AG04449 (cell line): ENCODE measurements at regions of chr9 and their contacts with region 1.

Region 1: DNA sequence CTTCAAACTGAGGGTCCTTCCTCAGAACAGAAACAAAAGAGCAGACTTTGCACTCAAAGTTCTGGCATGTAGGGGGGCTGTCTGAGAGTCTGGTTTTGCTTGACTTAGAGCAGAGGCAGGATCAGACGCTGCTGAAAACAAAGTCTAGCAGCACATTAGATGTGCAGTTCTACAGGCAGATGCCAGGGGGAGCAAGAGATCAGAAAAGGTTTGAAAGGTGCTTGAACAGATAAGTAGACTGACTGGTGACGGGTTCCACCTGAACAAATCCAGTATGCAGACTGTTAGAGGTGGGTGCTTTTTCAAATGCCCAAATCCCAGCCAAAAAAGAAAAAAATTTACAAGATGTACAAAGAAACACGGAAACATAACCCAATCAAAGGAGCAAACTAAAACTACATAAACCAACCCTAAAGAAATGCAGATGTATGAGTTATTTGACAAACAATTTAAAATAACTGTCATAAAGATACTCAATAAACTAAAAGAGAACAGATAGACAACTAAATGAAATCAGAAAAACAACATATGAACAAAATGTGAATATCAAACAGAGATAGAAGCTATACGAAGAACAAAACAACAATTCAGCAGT is 194.7 kb upstream of the FREM1 start:
- DNase-seq: no peak
- H3K4me3 ChIP-seq: no peak overlapping the region
- CTCF ChIP-seq: peak; percentile 71

Region 2: DNA sequence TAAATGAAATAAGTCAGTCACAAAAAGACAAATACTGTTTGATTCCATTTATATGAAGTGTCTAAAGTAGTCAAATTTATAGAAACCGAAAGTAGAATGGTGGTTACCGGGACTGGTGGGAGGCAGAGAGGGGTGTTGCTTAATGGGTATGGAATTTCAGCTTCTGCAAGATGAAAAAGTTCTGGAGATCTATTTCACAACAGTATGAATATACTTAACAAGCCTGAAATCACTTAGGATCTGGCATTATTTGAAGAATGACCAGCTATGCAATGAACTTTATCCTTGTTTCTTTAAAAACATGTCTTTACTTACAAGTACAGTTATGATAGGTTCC is 180.1 kb before region 1 on chr9:
- CTCF ChIA-PET with region 1: no interaction called
- POLR2A ChIA-PET with region 1: no interaction called
- DNase-seq: peak; percentile 50
- H3K4me3 ChIP-seq: peak overlapping the region; percentile 1; the same call in 1 of the 2 replicates
- CTCF ChIP-seq: no peak

Region 3: DNA sequence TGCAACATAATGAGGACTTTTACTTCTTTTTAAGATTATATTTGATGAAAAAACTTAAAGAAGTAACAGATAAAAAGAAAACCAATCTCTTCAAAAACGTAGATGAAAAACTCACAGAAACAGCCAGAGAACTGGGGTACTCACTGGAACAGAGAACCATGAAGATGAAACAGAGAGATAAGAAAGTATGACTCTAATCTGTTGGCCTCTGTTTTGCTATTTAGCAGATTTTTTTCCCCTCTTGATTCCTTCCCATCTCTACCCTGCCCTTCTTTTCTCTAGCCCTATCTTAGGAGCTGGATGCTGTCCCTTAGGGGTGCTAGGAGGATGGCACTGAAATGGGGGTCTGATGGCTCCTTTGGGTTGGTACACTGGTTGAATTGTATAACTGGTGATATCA is 97.2 kb before region 1 on chr9:
- CTCF ChIA-PET with region 1: no interaction called
- POLR2A ChIA-PET with region 1: no interaction called
- DNase-seq: no peak
- H3K4me3 ChIP-seq: no peak overlapping the region
- CTCF ChIP-seq: no peak

Region 4: DNA sequence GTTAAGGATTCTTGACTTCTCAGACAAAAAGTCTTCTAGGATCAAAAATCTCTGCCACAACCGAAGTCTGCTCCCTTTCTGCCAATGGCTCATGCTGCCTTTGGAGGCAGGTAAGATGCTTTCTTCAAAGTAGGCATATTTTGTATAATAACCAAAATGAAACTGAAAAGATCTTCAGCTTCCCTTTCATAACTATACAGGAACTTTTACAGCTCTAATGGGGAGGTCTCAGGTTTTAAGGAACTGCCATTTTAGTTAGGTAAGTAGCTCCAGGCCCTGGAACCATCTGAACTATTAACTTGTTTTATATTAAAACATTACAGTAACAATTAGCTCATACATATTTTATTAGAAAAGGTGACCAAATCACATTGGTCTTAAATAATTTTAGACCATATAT is 83.8 kb before region 1 on chr9:
- CTCF ChIA-PET with region 1: no interaction called
- POLR2A ChIA-PET with region 1: no interaction called
- DNase-seq: no peak
- H3K4me3 ChIP-seq: no peak overlapping the region
- CTCF ChIP-seq: no peak

Region 5: GRCh38 chr9:15116130-15116580 is 11.2 kb after region 1 on chr9:
- CTCF ChIA-PET with region 1: interaction called, 21 read pairs
- POLR2A ChIA-PET with region 1: no interaction called
- DNase-seq: no peak
- H3K4me3 ChIP-seq: no peak overlapping the region
- CTCF ChIP-seq: no peak